PC-3 (cell line): ENCODE measurements at regions of chr4 and their contacts with region 1.

Region 1: GRCh38 chr4:54308110-54308509 is 79.0 kb downstream of the PDGFRA start:
- DNase-seq: no peak
- ATAC-seq: no peak
- H3K4me3 ChIP-seq: no peak overlapping the region
- H3K27ac ChIP-seq: no peak overlapping the region
- H3K4me1 ChIP-seq: no peaks in the 10 kb centered on the region
- H3K27me3 ChIP-seq: peaks cover 53% of the 10 kb centered on the region
- CTCF ChIP-seq: no peak

Region 2: DNA sequence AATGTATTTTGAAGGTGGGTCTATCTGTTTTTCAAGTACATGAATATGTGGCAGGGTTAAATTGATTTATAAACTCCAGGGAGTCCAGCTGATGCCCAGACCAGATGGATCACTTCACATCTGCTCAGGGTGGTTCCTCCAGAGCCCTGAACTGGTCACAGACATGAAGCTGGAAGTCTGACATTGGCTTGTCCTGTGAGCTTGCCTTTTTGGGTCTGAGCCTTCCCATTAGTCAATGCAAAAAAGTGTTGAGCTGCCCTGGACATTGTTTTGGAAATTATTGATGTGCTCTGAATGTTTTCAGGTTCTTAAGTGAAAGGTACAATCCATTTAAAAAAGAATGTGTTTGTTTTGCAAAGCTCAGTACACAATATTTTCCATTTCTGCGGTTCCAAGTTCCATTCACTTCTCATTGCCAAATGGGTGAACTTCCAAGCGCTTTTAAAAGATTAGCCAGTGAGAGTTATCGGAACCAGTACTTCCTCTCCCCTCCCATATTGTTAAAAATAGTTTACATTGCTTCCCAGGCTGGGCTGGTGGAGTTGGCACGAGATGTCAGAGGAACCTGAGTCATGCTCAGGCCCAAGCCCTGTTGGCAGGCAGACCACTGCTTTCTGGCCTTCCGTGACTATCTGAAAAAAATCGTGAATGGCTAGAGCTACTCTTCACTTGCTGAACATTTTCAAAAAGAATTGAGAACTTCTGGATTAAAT is 26.9 kb before region 1 on chr4:
- CTCF ChIA-PET with region 1: no interaction called
- POLR2A ChIA-PET with region 1: no interaction called
- intact Hi-C with region 1: loop called (anchors 1 kb)
- DNase-seq: peak; percentile 90
- ATAC-seq: peak; percentile 96
- H3K4me3 ChIP-seq: no peak overlapping the region
- H3K27ac ChIP-seq: peak overlapping the region; percentile 58
- H3K4me1 ChIP-seq: peaks cover 25% of the 10 kb centered on the region
- H3K27me3 ChIP-seq: no peaks in the 10 kb centered on the region
- CTCF ChIP-seq: no peak

Region 3: GRCh38 chr4:54513204-54513603 is 205.1 kb after region 1 on chr4:
- CTCF ChIA-PET with region 1: no interaction called
- POLR2A ChIA-PET with region 1: no interaction called
- intact Hi-C with region 1: no loop called
- DNase-seq: peak; percentile 48
- ATAC-seq: no peak
- H3K4me3 ChIP-seq: no peak overlapping the region
- H3K27ac ChIP-seq: no peak overlapping the region
- H3K4me1 ChIP-seq: no peaks in the 10 kb centered on the region
- H3K27me3 ChIP-seq: peaks cover 15% of the 10 kb centered on the region
- CTCF ChIP-seq: no peak

Region 4: DNA sequence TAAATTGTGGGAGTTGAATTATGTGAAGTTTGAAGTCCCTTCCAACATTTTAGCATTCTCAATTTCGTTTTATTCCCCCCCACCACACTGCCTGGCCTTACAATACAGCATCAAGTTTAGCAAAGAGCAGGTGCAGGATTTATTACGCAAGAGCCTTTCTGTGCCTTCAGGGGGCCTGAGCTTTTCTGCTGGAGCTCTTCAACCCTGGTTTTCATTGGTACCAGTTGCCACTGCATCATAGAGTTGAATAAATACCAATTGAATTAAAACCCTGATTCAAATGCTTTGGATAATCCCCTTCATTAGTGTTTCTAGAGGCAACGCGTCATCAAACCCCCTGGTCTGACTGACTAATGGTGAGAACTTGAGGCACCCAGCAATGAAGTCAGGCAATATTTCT is 306.0 kb after region 1 on chr4:
- CTCF ChIA-PET with region 1: no interaction called
- POLR2A ChIA-PET with region 1: no interaction called
- intact Hi-C with region 1: no loop called
- DNase-seq: no peak
- ATAC-seq: no peak
- H3K4me3 ChIP-seq: no peak overlapping the region
- H3K27ac ChIP-seq: no peak overlapping the region
- H3K4me1 ChIP-seq: no peaks in the 10 kb centered on the region
- H3K27me3 ChIP-seq: peaks cover 22% of the 10 kb centered on the region
- CTCF ChIP-seq: no peak